Activated CD4-positive, alpha-beta T cell treated with anti-CD3 and anti-CD28 coated beads, Interleukin-2, amount 10 ng/mL, durations not matched to agents 24 days and 14 days (primary cell): ENCODE measurements at regions of chr12 and their contacts with region 1.

Region 1: GRCh38 chr12:76559400-76560085 is at the start of gene OSBPL8:
- DNase-seq: peak; percentile 98
- H3K4me3 Mint-ChIP-seq: peak within 1 kb of the TSS; percentile 95
- H3K27ac Mint-ChIP-seq: peak within 1 kb of the TSS; percentile 99
- H3K4me1 Mint-ChIP-seq: peaks cover 38% of the 10 kb centered on the region
- H3K27me3 Mint-ChIP-seq: no peaks in the 10 kb centered on the region
- total RNA-seq, gene OSBPL8: 90.8 and 92.0 TPM in 2 replicates

Region 2: DNA sequence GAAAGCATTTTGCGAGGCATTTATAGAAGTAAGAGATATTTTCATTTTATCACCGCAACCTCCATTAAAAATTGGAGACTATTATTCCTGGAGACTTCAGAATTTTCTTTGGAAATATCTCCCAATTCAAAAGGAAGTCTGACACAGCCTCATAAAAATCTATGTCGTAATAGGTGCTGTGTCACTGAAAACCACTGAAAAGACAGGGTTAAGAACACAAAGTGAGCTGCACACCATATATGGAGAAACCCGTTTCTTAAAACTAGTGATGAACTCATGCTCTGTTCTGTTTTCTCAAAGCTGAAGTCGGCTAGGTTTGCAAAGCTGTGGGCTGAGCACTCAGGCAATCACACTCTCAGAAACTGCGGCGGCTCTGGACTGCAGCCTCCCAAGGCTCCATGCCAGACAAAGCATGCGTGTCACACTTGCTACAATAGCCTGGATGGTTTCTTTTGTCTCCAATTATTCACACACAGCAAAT is 1079.0 kb before region 1 on chr12 and contains the start of gene GLIPR1:
- intact Hi-C with region 1: loop called (anchors 2 kb)
- DNase-seq: peak; percentile 92
- H3K4me3 Mint-ChIP-seq: peak within 1 kb of the TSS; percentile 77
- H3K27ac Mint-ChIP-seq: peak within 1 kb of the TSS; percentile 91
- H3K4me1 Mint-ChIP-seq: peaks cover 67% of the 10 kb centered on the region
- H3K27me3 Mint-ChIP-seq: peaks cover 2% of the 10 kb centered on the region
- total RNA-seq, gene GLIPR1: 4.3 and 5.3 TPM in 2 replicates

Region 3: GRCh38 chr12:76020731-76021672 is 538.5 kb before region 1 on chr12:
- intact Hi-C with region 1: loop called (anchors 1 kb)
- DNase-seq: peak; percentile 91
- H3K4me3 Mint-ChIP-seq: peak overlapping the region; percentile 72
- H3K27ac Mint-ChIP-seq: peak overlapping the region; percentile 98
- H3K4me1 Mint-ChIP-seq: peaks cover 51% of the 10 kb centered on the region
- H3K27me3 Mint-ChIP-seq: no peaks in the 10 kb centered on the region

Region 4: GRCh38 chr12:76158518-76159321 is 400.8 kb before region 1 on chr12:
- intact Hi-C with region 1: loop called (anchors 2 kb)
- DNase-seq: peak; percentile 91
- H3K4me3 Mint-ChIP-seq: peak overlapping the region; percentile 6
- H3K27ac Mint-ChIP-seq: peak overlapping the region; percentile 84
- H3K4me1 Mint-ChIP-seq: peaks cover 16% of the 10 kb centered on the region
- H3K27me3 Mint-ChIP-seq: peaks cover 30% of the 10 kb centered on the region

Region 5: GRCh38 chr12:76519538-76519937 is 40.0 kb before region 1 on chr12:
- intact Hi-C with region 1: loop called (anchors 1 kb)
- DNase-seq: peak; percentile 62
- H3K4me3 Mint-ChIP-seq: no peak overlapping the region
- H3K27ac Mint-ChIP-seq: peak overlapping the region; percentile 56
- H3K4me1 Mint-ChIP-seq: peaks cover 27% of the 10 kb centered on the region
- H3K27me3 Mint-ChIP-seq: no peaks in the 10 kb centered on the region

Region 6: GRCh38 chr12:76763743-76764675 is 204.5 kb after region 1 on chr12 and contains the start of gene ZDHHC17:
- intact Hi-C with region 1: loop called (anchors 1 kb)
- DNase-seq: peak; percentile 98
- H3K4me3 Mint-ChIP-seq: peak within 1 kb of the TSS; percentile 93
- H3K27ac Mint-ChIP-seq: peak within 1 kb of the TSS; percentile 95
- H3K4me1 Mint-ChIP-seq: peaks cover 16% of the 10 kb centered on the region
- H3K27me3 Mint-ChIP-seq: peaks cover 11% of the 10 kb centered on the region
- total RNA-seq, gene ZDHHC17: 24.6 and 31.2 TPM in 2 replicates